Activated CD8-positive, alpha-beta memory T cell treated with anti-CD3 and anti-CD28 coated beads, Interleukin-2, amount 10 ng/mL, durations not matched to agents 7 days and 5 days (primary cell): ENCODE measurements at regions of chr20 and their contacts with region 1.

Region 1: DNA sequence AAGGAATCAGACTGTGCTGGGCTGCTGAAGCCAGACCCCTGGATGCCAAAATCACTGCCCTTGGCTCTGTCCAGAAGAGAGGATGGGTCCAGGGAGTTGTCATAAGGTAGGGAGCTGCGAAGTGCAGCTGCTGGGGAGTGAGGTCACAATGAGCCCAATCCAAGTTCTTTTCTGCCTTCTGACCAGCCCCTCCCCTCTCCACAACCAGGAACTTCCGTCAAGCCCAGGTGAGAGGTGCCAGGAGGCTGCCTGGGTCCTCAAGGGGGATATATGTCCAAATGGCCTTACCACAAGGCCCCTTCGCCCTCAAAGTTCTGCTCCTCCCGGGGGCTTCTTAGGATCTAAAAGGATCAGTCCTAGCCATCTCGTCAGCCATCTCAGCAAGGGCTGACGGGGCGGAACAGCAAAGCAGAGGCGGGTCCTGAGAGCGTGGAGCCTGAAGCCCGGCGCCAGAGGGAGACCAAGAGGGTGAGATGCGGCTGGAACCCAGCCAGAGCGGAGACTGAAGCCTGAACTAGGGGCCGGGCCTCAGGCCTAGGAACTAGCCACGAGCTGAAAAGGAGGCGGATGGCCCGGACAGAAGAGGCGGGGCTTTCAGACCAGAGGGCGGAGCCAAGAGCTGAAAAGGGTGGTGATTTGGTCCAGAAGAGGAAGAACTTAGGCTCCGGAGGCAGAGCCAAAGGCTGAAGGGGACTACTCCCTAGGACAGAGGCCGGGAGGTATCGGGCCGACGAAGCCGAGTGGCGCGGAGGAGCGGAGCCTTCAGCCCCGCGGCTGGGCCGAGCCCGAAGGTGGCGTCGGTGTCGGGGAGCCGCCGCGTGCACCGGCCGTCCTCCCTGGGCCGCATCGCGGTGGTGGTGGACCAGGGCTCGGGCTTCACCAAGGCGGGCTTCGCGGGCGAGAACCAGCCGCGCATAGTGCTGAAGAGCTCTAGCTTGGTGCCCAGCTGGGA is at the start of gene ACTL10:
- DNase-seq: peak; percentile 94
- ATAC-seq: peak; percentile 68
- H3K4me3 Mint-ChIP-seq: peak within 1 kb of the TSS; percentile 89
- H3K27ac Mint-ChIP-seq: peak within 1 kb of the TSS; percentile 92
- H3K4me1 Mint-ChIP-seq: peaks cover 45% of the 10 kb centered on the region
- H3K27me3 Mint-ChIP-seq: no peaks in the 10 kb centered on the region
- total RNA-seq, gene ACTL10: 3.7 to 3.9 TPM

Region 2: DNA sequence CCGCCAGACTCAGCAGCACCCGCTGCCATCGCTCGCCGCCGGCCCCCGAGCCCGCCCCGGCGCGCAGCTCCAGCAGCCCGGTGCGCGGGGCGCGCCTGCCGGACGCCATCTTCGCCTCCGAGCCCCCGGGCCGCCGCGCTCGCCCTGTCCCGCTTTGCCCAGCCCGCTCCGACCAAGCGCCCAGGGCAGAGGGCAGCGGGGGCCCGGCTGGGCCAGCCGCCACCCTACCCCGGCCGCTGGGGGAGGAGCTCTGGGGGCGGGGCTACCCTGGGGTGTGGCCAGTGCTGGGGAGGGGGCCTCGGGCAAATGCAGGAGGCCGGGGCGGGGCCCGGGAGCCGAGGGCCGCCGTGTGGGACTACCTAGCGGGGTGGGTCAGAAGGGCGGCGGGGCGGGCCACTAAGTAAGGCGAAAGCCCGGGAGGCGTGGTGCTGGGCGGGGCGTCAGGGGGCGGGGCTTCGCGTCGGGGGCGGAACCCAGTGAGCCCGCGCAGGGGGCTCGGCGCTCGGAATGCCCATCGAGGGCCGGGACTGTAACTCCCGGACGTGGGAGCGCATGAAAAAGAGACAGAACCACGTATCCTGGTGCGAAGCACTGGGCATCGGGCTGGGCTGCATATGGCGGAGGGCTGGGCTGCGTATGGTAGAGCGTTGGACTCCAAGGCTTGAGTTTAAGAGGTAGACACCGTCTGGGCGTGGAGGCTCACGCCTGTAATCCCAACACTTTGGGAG is 222.9 kb before region 1 on chr20 and contains the start of gene SNTA1:
- CTCF ChIA-PET with region 1: interaction called, 22 read pairs
- DNase-seq: peak; percentile 94
- ATAC-seq: peak; percentile 91
- H3K4me3 Mint-ChIP-seq: peak within 1 kb of the TSS; percentile 86
- H3K27ac Mint-ChIP-seq: peak within 1 kb of the TSS; percentile 84
- H3K4me1 Mint-ChIP-seq: peaks cover 20% of the 10 kb centered on the region
- H3K27me3 Mint-ChIP-seq: peaks cover 7% of the 10 kb centered on the region
- total RNA-seq, gene SNTA1: 3.7 to 5.7 TPM

Region 3: GRCh38 chr20:33460711-33461110 is 205.9 kb before region 1 on chr20:
- CTCF ChIA-PET with region 1: interaction called, 37 read pairs
- DNase-seq: no peak
- ATAC-seq: no peak
- H3K4me3 Mint-ChIP-seq: no peak overlapping the region
- H3K27ac Mint-ChIP-seq: no peak overlapping the region
- H3K4me1 Mint-ChIP-seq: peaks cover 1% of the 10 kb centered on the region
- H3K27me3 Mint-ChIP-seq: no peaks in the 10 kb centered on the region

Region 4: DNA sequence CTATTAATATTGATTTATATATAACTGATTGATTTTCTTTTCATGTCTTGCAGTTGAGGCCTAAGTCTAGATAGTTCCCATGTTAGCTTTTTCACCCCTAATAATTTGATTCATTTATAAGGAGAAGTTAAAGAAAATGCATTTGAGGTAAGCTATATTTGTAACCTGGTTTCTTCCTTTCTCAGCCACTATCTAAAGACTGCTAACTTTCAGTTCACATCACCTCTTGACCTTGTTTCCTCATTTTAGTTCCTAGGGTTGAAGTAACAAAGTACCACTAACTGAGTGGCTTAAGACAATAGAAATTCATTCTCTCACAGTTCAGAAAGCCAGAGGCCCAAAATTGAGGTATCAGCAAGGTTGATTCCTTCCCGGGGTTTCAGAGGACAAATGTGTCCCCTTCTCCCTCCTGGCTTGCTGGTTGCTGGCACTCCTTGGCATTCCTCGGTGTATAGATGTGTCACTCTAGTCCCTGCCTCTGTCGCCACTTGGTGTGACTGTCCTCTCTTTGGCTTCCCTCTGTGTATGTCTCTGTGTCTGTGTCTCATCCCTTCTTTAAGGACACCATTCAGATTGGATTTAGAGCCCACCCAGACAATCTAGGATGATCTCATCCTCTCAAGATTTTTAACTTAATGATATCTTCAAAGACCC is 60.3 kb before region 1 on chr20:
- CTCF ChIA-PET with region 1: no interaction called
- DNase-seq: no peak
- ATAC-seq: no peak
- H3K4me3 Mint-ChIP-seq: no peak overlapping the region
- H3K27ac Mint-ChIP-seq: no peak overlapping the region
- H3K4me1 Mint-ChIP-seq: peaks cover 28% of the 10 kb centered on the region
- H3K27me3 Mint-ChIP-seq: no peaks in the 10 kb centered on the region

Region 5: GRCh38 chr20:33647603-33648395 is 18.8 kb before region 1 on chr20:
- CTCF ChIA-PET with region 1: interaction called, 67 read pairs
- DNase-seq: peak; percentile 68
- ATAC-seq: peak; percentile 77
- H3K4me3 Mint-ChIP-seq: no peak overlapping the region
- H3K27ac Mint-ChIP-seq: no peak overlapping the region
- H3K4me1 Mint-ChIP-seq: peaks cover 42% of the 10 kb centered on the region
- H3K27me3 Mint-ChIP-seq: no peaks in the 10 kb centered on the region

Region 6: GRCh38 chr20:33686100-33686983 is 19.8 kb after region 1 on chr20 and contains the start of gene E2F1:
- CTCF ChIA-PET with region 1: interaction called, 106 read pairs
- DNase-seq: peak; percentile 98
- ATAC-seq: peak; percentile 91
- H3K4me3 Mint-ChIP-seq: peak within 1 kb of the TSS; percentile 93
- H3K27ac Mint-ChIP-seq: peak within 1 kb of the TSS; percentile 95
- H3K4me1 Mint-ChIP-seq: peaks cover 82% of the 10 kb centered on the region
- H3K27me3 Mint-ChIP-seq: no peaks in the 10 kb centered on the region
- total RNA-seq, gene E2F1: 87.7 to 100 TPM

Region 7: GRCh38 chr20:33773412-33774089 is 107.0 kb after region 1 on chr20:
- CTCF ChIA-PET with region 1: no interaction called
- DNase-seq: no peak
- ATAC-seq: peak; percentile 38
- H3K4me3 Mint-ChIP-seq: no peak overlapping the region
- H3K27ac Mint-ChIP-seq: no peak overlapping the region
- H3K4me1 Mint-ChIP-seq: peaks cover 22% of the 10 kb centered on the region
- H3K27me3 Mint-ChIP-seq: no peaks in the 10 kb centered on the region